H1 (cell line): ENCODE measurements at regions of chr11 and their contacts with region 1.

Region 1: DNA sequence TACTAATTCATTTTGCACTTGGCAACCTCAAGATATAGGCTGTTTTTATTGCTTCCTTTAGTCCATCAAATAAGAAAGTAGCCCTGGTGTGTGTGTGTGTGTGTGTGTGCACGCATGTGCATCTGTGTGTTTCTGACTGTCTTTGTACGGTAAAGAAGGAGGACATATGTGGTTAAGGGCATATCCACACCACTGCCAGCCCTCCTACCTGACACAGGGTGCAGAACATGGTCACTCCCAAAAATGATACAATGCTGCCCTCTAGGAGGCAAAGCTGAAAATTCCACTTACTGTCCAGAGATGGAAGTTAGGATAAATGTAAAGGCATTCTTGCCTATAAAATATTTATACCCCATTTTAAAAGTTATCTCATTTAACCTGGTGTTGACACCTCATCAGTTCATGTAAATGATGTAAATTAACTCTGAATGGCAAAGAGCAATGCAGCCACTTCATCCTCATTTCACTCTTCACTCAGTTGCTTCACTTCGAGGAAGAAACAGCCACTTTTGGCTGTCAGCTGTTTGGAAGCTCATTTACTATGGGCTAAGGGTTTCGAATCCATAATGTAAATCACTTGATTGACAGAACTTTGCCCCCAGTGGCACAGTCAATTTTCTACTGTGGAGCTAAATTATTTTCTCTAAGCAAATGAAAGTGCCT is 83.1 kb upstream of the MTNR1B start:
- DNase-seq: peak in 1 of 2 experiments; percentile 62
- H3K4me3 ChIP-seq: no peak overlapping the region
- H3K27ac ChIP-seq: no peak overlapping the region
- H3K4me1 ChIP-seq: peaks cover 0 to 2% (median 0%) of the 10 kb centered on the region in 4 experiments; a peak in 1 of 7 replicates
- H3K27me3 ChIP-seq: no peaks in the 10 kb centered on the region
- CTCF ChIP-seq: peak; percentile 31 to 78 (median 70)
- EP300 ChIP-seq: no peak
- POLR2A ChIP-seq: no peak
- RAD21 ChIP-seq: peak; percentile 96 to 98

Region 2: GRCh38 chr11:92070026-92070889 is 816.1 kb before region 1 on chr11:
- CTCF ChIA-PET with region 1: interaction called, 36 read pairs
- POLR2A ChIA-PET with region 1: interaction called, 4 read pairs
- DNase-seq: peak in 1 of 2 experiments; percentile 47
- H3K4me3 ChIP-seq: no peak overlapping the region
- H3K27ac ChIP-seq: no peak overlapping the region
- H3K4me1 ChIP-seq: no peaks in the 10 kb centered on the region
- H3K27me3 ChIP-seq: no peaks in the 10 kb centered on the region
- CTCF ChIP-seq: peak in 2 of 3 experiments; percentile 29 to 31; a peak in 2 of 4 replicates
- EP300 ChIP-seq: no peak
- POLR2A ChIP-seq: no peak
- RAD21 ChIP-seq: peak; percentile 71 to 72

Region 3: DNA sequence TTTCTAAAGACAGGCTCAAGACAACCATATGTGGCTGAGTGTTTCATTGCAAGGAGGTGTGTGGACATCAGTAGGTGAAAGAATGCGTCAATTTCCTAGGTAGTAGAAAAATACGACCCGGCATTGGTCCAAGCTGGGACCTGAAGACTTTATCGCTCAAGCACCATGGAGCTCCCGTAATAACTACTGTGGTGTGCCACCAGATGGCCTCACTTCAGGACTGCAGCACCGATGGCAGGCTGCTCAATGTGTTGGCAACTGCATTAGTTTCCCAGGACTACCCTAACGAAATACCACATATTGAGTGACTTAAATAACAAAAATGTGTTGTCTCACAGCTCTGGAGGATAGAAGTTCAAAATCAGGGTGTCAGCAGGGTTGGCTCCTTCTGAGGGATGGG is 734.1 kb before region 1 on chr11:
- CTCF ChIA-PET with region 1: interaction called, 26 read pairs
- POLR2A ChIA-PET with region 1: no interaction called
- DNase-seq: peak in 1 of 2 experiments; percentile 27
- H3K4me3 ChIP-seq: no peak overlapping the region
- H3K27ac ChIP-seq: no peak overlapping the region
- H3K4me1 ChIP-seq: peaks cover 0 to 7% (median 0%) of the 10 kb centered on the region in 4 experiments; a peak in 2 of 7 replicates
- H3K27me3 ChIP-seq: no peaks in the 10 kb centered on the region
- CTCF ChIP-seq: peak; percentile 56 to 63 (median 63)
- EP300 ChIP-seq: no peak
- POLR2A ChIP-seq: no peak
- RAD21 ChIP-seq: peak; percentile 61 to 75

Region 4: DNA sequence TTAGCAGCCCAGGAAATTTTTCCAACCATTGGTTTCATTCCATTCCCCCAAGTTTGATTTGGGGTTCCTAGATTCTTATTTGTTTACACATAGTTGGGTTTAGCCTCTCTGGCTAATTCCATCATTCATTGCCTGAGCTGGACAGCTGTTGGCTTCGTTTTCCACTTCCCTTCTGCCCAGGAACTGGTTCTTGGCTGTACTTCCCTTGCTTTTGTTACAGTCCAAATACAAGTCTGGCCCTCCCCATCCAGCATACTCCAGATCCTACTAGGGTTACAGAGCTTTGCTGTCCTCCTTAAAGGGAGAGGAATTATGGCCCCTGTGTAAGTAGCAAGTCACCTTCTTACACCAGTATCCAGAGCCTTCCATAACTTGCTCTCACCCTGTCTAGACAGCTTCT is 305.5 kb before region 1 on chr11:
- CTCF ChIA-PET with region 1: interaction called, 12 read pairs
- POLR2A ChIA-PET with region 1: no interaction called
- DNase-seq: no peak
- H3K4me3 ChIP-seq: no peak overlapping the region
- H3K27ac ChIP-seq: no peak overlapping the region
- H3K4me1 ChIP-seq: no peaks in the 10 kb centered on the region
- H3K27me3 ChIP-seq: no peaks in the 10 kb centered on the region
- CTCF ChIP-seq: no peak
- EP300 ChIP-seq: no peak
- POLR2A ChIP-seq: no peak
- RAD21 ChIP-seq: no peak

Region 5: DNA sequence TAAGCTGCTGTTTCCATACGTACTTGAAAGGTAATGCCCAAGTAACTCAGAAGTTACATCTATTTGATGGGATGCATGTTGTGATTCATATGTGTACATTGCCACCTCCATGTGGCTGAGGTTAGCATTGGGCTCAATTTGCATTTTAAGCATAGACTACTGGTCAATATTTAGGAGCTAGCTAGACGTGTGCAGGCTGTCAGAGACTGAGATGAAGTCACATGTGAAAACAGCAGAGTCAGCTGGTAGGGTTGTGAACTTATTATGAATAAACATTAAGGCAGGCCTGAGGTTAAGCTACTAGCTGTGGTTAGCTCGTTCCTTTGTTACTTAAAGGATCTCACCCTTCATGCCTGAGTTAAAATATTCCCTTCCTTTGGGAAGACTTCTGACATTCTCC is 31.4 kb before region 1 on chr11:
- CTCF ChIA-PET with region 1: interaction called, 11 read pairs
- POLR2A ChIA-PET with region 1: no interaction called
- DNase-seq: no peak
- H3K4me3 ChIP-seq: no peak overlapping the region
- H3K27ac ChIP-seq: no peak overlapping the region
- H3K4me1 ChIP-seq: no peaks in the 10 kb centered on the region
- H3K27me3 ChIP-seq: no peaks in the 10 kb centered on the region
- CTCF ChIP-seq: no peak
- EP300 ChIP-seq: no peak
- POLR2A ChIP-seq: no peak
- RAD21 ChIP-seq: no peak

Region 6: DNA sequence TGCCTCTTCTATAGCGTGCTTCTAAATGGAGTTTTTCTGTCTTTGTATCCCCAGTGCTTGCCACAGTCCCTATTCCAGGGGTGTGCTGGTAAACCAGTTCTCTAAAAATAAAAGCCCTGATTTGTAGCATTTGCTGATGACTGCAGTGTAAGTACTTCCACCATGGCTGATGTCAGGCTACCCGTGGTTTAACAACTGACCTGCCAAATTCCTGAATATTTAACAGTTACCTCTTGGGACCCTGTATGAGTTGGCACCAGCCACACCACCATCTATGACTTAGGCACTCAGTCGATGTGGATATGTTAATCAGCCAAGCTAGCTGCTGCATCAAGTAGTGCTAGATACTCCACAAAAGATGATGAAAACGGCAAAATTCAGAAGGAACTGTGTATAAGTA is 10.9 kb before region 1 on chr11:
- CTCF ChIA-PET with region 1: interaction called, 29 read pairs
- POLR2A ChIA-PET with region 1: interaction called, 3 read pairs
- DNase-seq: no peak
- H3K4me3 ChIP-seq: no peak overlapping the region
- H3K27ac ChIP-seq: no peak overlapping the region
- H3K4me1 ChIP-seq: peaks cover 0 to 3% (median 0%) of the 10 kb centered on the region in 4 experiments; a peak in 1 of 7 replicates
- H3K27me3 ChIP-seq: no peaks in the 10 kb centered on the region
- CTCF ChIP-seq: no peak
- EP300 ChIP-seq: no peak
- POLR2A ChIP-seq: no peak
- RAD21 ChIP-seq: no peak

Region 7: DNA sequence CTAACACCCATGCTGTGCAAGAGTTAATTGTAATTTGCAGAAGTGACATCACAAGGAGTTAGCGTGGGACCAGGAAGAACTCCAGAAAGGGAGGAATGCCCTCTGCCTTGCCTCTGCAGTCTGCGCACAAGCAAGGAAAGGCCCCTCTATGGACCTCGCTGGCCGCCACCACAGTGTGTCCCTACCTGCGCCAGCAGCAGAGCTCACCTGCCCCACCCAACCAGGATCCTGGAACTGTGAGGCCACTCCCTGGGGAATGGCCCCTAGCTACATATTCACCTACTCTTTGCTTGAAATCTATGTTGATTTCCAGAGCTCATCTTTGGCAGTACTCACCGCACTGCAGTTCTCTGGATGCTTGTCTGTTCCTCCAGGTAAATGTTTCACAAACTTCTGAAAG is 11.1 kb after region 1 on chr11:
- CTCF ChIA-PET with region 1: interaction called, 10 read pairs
- POLR2A ChIA-PET with region 1: no interaction called
- DNase-seq: no peak
- H3K4me3 ChIP-seq: no peak overlapping the region
- H3K27ac ChIP-seq: no peak overlapping the region
- H3K4me1 ChIP-seq: 0 out of 7 replicates have a peak, but pooled peaks cover 0 to 2% (median 0%) of the 10 kb centered on the region in 4 experiments
- H3K27me3 ChIP-seq: no peaks in the 10 kb centered on the region
- CTCF ChIP-seq: no peak
- EP300 ChIP-seq: no peak
- POLR2A ChIP-seq: no peak
- RAD21 ChIP-seq: no peak

Region 8: GRCh38 chr11:92978271-92979111 is 92.1 kb after region 1 on chr11:
- CTCF ChIA-PET with region 1: no interaction called
- POLR2A ChIA-PET with region 1: no interaction called
- DNase-seq: no peak
- H3K4me3 ChIP-seq: no peak overlapping the region
- H3K27ac ChIP-seq: no peak overlapping the region
- H3K4me1 ChIP-seq: no peaks in the 10 kb centered on the region
- H3K27me3 ChIP-seq: no peaks in the 10 kb centered on the region; a peak in 1 of 7 replicates
- CTCF ChIP-seq: no peak
- EP300 ChIP-seq: no peak
- POLR2A ChIP-seq: no peak
- RAD21 ChIP-seq: no peak